ENCODE measurements at regions of chr11 and their contacts with region 1.

Region 1: GRCh38 chr11:35391922-35392813 is 27.2 kb downstream of the SLC1A2 start:
- DNase-seq: peak; percentile 84
- ATAC-seq: peak; percentile 72
- H3K4me3 ChIP-seq: peak overlapping the region in 1 of 5 experiments; percentile 29
- H3K4me3 Mint-ChIP-seq: peak overlapping the region; percentile 38
- H3K27ac ChIP-seq: no peak overlapping the region
- H3K27ac Mint-ChIP-seq: no peak overlapping the region
- H3K4me1 ChIP-seq: peaks cover 10 to 18% of the 10 kb centered on the region in 2 donors
- H3K4me1 Mint-ChIP-seq: peaks cover 23% of the 10 kb centered on the region
- H3K27me3 ChIP-seq: peaks cover 0 to 3% (median 0%) of the 10 kb centered on the region in 4 experiments
- H3K27me3 Mint-ChIP-seq: no peaks in the 10 kb centered on the region
- CTCF ChIP-seq: peak; percentile 99

Region 2: GRCh38 chr11:34512840-34513681 is 879.1 kb before region 1 on chr11:
- CTCF ChIA-PET with region 1: interaction called, 43 read pairs
- POLR2A ChIA-PET with region 1: no interaction called
- intact Hi-C with region 1: no loop called
- DNase-seq: peak; percentile 60
- ATAC-seq: peak; percentile 82
- H3K4me3 ChIP-seq: no peak overlapping the region
- H3K4me3 Mint-ChIP-seq: no peak overlapping the region
- H3K27ac ChIP-seq: no peak overlapping the region
- H3K27ac Mint-ChIP-seq: no peak overlapping the region
- H3K4me1 ChIP-seq: no peaks in the 10 kb centered on the region
- H3K4me1 Mint-ChIP-seq: no peaks in the 10 kb centered on the region
- H3K27me3 ChIP-seq: peaks cover 0 to 4% (median 0%) of the 10 kb centered on the region in 4 experiments
- H3K27me3 Mint-ChIP-seq: peaks cover 6% of the 10 kb centered on the region
- CTCF ChIP-seq: peak; percentile 80

Region 3: DNA sequence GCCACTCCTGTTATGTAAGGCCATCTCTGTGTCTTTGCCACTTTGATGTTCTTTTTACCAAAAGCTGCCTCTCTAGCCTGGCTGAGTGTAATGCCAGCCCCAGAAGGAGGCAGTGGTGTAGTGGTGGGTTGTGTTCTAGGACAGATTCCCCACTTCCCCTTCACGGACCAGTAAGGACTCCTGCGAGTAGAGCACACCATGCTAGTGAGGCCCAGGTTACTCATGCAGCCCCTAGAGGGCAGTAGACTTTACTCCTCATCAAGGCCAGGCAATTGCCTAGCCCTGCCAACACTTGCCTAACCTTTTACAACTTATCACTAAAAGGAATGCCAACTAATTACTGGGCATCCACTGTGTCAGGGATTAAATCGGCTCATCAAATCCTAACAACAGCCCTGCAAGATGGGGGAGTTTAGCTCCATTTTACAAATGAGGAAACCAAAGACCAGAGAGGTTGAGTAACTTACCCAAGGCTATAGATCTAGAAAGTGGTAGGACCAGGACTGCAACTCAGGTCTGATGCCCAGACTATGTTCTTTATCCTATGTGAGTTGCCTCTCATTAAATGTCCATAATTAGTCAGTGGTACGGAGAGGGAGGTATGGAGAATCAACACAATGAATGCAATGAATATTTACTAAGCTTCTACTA is 551.3 kb before region 1 on chr11:
- CTCF ChIA-PET with region 1: interaction called, 4 read pairs
- POLR2A ChIA-PET with region 1: no interaction called
- intact Hi-C with region 1: loop called (anchors 1 kb)
- DNase-seq: peak; percentile 36
- ATAC-seq: peak; percentile 39
- H3K4me3 ChIP-seq: no peak overlapping the region
- H3K4me3 Mint-ChIP-seq: no peak overlapping the region
- H3K27ac ChIP-seq: no peak overlapping the region
- H3K27ac Mint-ChIP-seq: no peak overlapping the region
- H3K4me1 ChIP-seq: no peaks in the 10 kb centered on the region
- H3K4me1 Mint-ChIP-seq: no peaks in the 10 kb centered on the region
- H3K27me3 ChIP-seq: peaks cover 0 to 4% (median 1%) of the 10 kb centered on the region in 4 experiments
- H3K27me3 Mint-ChIP-seq: peaks cover 22% of the 10 kb centered on the region
- CTCF ChIP-seq: peak; percentile 51

Region 4: GRCh38 chr11:34940026-34940677 is 452.0 kb before region 1 on chr11:
- CTCF ChIA-PET with region 1: interaction called, 19 read pairs
- POLR2A ChIA-PET with region 1: no interaction called
- intact Hi-C with region 1: no loop called
- DNase-seq: peak; percentile 14
- ATAC-seq: no peak
- H3K4me3 ChIP-seq: no peak overlapping the region
- H3K4me3 Mint-ChIP-seq: no peak overlapping the region
- H3K27ac ChIP-seq: no peak overlapping the region
- H3K27ac Mint-ChIP-seq: no peak overlapping the region
- H3K4me1 ChIP-seq: no peaks in the 10 kb centered on the region
- H3K4me1 Mint-ChIP-seq: peaks cover 13% of the 10 kb centered on the region
- H3K27me3 ChIP-seq: no peaks in the 10 kb centered on the region
- H3K27me3 Mint-ChIP-seq: no peaks in the 10 kb centered on the region
- CTCF ChIP-seq: peak; percentile 36

Region 5: DNA sequence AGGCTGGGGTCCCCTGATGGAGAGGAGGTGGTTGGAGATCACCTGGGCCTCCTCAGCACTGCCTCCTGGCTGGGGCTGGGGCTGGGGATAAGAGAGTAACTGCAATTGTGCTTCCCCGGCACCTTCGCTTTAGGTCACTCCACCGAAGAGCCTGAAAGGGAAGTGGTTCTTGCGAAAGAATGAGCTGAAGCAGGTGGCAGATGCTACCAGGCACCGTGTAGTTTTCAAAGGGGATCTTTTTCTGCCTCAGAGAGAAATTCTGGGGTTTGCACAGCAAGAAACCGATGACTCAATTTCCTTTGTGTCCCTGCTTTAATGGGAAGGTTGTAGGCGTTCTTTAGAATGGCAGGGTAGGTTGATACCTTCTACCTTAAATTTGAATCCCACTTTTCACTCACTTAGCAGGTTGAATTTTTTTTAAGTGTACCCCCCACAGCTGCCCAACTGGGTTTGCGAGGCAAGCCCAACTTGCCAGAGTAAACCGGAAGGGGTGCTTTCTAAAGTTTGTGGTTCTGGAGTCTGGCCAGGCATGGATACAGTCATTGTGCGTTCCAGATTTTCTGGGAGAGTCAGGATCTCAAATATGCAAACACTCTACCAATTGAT is 247.9 kb before region 1 on chr11:
- CTCF ChIA-PET with region 1: interaction called, 9 read pairs
- POLR2A ChIA-PET with region 1: no interaction called
- intact Hi-C with region 1: loop called (anchors 5 kb)
- DNase-seq: peak; percentile 90
- ATAC-seq: peak; percentile 60
- H3K4me3 ChIP-seq: peak overlapping the region; percentile 1 to 89 (median 26)
- H3K4me3 Mint-ChIP-seq: peak overlapping the region; percentile 78
- H3K27ac ChIP-seq: peak overlapping the region; percentile 79 to 87
- H3K27ac Mint-ChIP-seq: peak overlapping the region; percentile 83
- H3K4me1 ChIP-seq: peaks cover 80 to 90% of the 10 kb centered on the region in 2 donors
- H3K4me1 Mint-ChIP-seq: peaks cover 80% of the 10 kb centered on the region
- H3K27me3 ChIP-seq: no peaks in the 10 kb centered on the region
- H3K27me3 Mint-ChIP-seq: no peaks in the 10 kb centered on the region
- CTCF ChIP-seq: peak; percentile 23

Region 6: DNA sequence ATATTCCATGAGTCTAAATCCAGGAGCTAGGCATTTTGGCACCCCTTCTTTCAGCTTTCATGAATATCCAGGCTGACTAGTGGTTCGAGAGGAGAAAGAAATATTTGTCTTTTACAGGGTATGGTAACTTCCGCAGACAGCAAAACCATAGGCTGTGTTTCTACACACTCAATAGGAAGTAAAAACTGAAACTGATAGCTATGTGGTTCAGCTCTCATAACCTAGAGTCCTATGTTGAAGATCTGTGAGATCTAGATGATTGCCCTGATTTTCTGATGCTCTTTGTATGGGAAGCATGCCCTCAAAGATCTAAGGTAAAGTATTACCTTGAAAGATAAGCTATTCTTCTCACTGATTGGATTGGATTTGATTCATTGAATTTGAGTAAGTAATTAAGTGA is 134.9 kb before region 1 on chr11:
- CTCF ChIA-PET with region 1: interaction called, 5 read pairs
- POLR2A ChIA-PET with region 1: no interaction called
- intact Hi-C with region 1: loop called (anchors 5 kb)
- DNase-seq: peak; percentile 61
- ATAC-seq: peak; percentile 71
- H3K4me3 ChIP-seq: peak overlapping the region in 2 of 5 experiments; percentile 36 to 59
- H3K4me3 Mint-ChIP-seq: peak overlapping the region; percentile 46
- H3K27ac ChIP-seq: peak overlapping the region; percentile 56 to 63
- H3K27ac Mint-ChIP-seq: peak overlapping the region; percentile 54
- H3K4me1 ChIP-seq: peaks cover 12 to 13% of the 10 kb centered on the region in 2 donors
- H3K4me1 Mint-ChIP-seq: peaks cover 16% of the 10 kb centered on the region
- H3K27me3 ChIP-seq: no peaks in the 10 kb centered on the region
- H3K27me3 Mint-ChIP-seq: no peaks in the 10 kb centered on the region
- CTCF ChIP-seq: no peak

Region 7: GRCh38 chr11:35404388-35404775 is 12.2 kb after region 1 on chr11:
- CTCF ChIA-PET with region 1: interaction called, 11 read pairs
- POLR2A ChIA-PET with region 1: no interaction called
- intact Hi-C with region 1: no loop called
- DNase-seq: peak; percentile 8
- ATAC-seq: no peak
- H3K4me3 ChIP-seq: no peak overlapping the region
- H3K4me3 Mint-ChIP-seq: no peak overlapping the region
- H3K27ac ChIP-seq: no peak overlapping the region
- H3K27ac Mint-ChIP-seq: no peak overlapping the region
- H3K4me1 ChIP-seq: no peaks in the 10 kb centered on the region
- H3K4me1 Mint-ChIP-seq: no peaks in the 10 kb centered on the region
- H3K27me3 ChIP-seq: peaks cover 0 to 8% (median 3%) of the 10 kb centered on the region in 4 experiments
- H3K27me3 Mint-ChIP-seq: peaks cover 5% of the 10 kb centered on the region
- CTCF ChIP-seq: peak; percentile 8